ENCODE measurements at regions of chr1 and their contacts with region 1.

Region 1: GRCh38 chr1:105459759-105460158 is 1596.7 kb upstream of the PRMT6 start:
- DNase-seq: no peak
- H3K4me3 ChIP-seq: no peak overlapping the region
- H3K27ac ChIP-seq: no peak overlapping the region
- H3K4me1 ChIP-seq: no peaks in the 10 kb centered on the region
- H3K27me3 ChIP-seq: no peaks in the 10 kb centered on the region
- CTCF ChIP-seq: no peak
- EP300 ChIP-seq: no peak
- POLR2A ChIP-seq: no peak

Region 2: DNA sequence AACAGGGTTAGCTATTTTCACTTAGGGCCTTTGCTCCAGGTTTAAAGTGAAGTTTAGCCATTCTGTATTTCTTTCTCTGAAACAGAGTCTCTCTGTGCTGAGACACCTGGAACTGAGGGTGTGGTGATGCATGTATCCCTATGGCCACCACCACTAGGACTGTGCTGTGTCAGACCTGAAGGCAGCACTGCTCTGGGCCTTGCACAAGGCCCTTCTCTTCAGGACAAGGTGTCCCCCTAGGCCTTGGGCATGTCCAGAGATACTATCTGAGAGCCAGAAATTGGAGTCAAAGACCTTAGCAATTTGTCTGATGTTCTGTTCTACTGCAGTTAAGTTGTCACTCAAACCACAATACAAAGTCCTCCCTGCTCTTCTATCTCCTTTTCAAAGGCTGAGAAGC is 60.9 kb before region 1 on chr1:
- intact Hi-C with region 1: loop called (anchors 10 kb)
- DNase-seq: no peak
- H3K4me3 ChIP-seq: no peak overlapping the region
- H3K27ac ChIP-seq: no peak overlapping the region
- H3K4me1 ChIP-seq: no peaks in the 10 kb centered on the region
- H3K27me3 ChIP-seq: no peaks in the 10 kb centered on the region
- CTCF ChIP-seq: no peak
- EP300 ChIP-seq: no peak
- POLR2A ChIP-seq: no peak

Region 3: DNA sequence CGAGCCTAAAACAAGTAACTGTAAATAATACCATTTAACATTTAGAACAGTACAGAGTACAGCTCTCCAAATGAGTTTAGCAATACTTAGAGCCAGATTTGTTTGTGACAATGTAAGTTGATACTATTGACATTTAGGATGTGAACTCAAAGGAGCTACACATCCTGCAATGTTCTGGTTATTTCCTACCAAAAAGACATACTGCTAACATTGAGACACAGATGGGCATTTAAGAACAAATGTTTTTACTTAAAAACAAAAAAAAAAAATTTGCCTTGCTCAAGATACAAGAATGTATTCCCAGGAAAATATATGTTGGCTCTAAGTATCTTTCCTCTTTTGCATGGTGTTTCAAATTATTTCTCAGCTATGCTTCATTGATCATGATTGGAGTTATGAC is 131.9 kb after region 1 on chr1:
- intact Hi-C with region 1: no loop called
- DNase-seq: no peak
- H3K4me3 ChIP-seq: no peak overlapping the region
- H3K27ac ChIP-seq: no peak overlapping the region
- H3K4me1 ChIP-seq: no peaks in the 10 kb centered on the region
- H3K27me3 ChIP-seq: no peaks in the 10 kb centered on the region
- CTCF ChIP-seq: no peak
- EP300 ChIP-seq: no peak
- POLR2A ChIP-seq: no peak